Transverse colon (tissue), 4 donors: ENCODE measurements at regions of chr18 and their contacts with region 1.

Region 1: GRCh38 chr18:55589625-55590291 is 1.8 kb upstream of the TCF4 start:
- DNase-seq: peak; percentile 92
- H3K4me3 ChIP-seq: peak overlapping the region; percentile 22 to 69 (median 58)
- H3K27ac ChIP-seq: peak overlapping the region; percentile 83 to 92 (median 88)
- H3K4me1 ChIP-seq: peaks cover 0 to 28% (median under 1%) of the 10 kb centered on the region in 4 donors
- H3K27me3 ChIP-seq: peaks cover 31% of the 10 kb centered on the region
- CTCF ChIP-seq: no peak
- EP300 ChIP-seq: no peak
- POLR2A ChIP-seq: peak; percentile 46

Region 2: GRCh38 chr18:55234366-55235093 is 355.2 kb before region 1 on chr18:
- in situ Hi-C with region 1: loop called in 2 of 4 experiments (anchors 25 kb)
- intact Hi-C with region 1: loop called (anchors 10 kb)
- DNase-seq: peak; percentile 78
- H3K4me3 ChIP-seq: no peak overlapping the region
- H3K27ac ChIP-seq: peak overlapping the region; percentile 1 to 15 (median 2)
- H3K4me1 ChIP-seq: peaks cover 0 to 5% (median 0%) of the 10 kb centered on the region in 4 donors
- H3K27me3 ChIP-seq: no peaks in the 10 kb centered on the region
- CTCF ChIP-seq: peak; percentile 66 to 81 (median 70)
- EP300 ChIP-seq: no peak
- POLR2A ChIP-seq: no peak

Region 3: DNA sequence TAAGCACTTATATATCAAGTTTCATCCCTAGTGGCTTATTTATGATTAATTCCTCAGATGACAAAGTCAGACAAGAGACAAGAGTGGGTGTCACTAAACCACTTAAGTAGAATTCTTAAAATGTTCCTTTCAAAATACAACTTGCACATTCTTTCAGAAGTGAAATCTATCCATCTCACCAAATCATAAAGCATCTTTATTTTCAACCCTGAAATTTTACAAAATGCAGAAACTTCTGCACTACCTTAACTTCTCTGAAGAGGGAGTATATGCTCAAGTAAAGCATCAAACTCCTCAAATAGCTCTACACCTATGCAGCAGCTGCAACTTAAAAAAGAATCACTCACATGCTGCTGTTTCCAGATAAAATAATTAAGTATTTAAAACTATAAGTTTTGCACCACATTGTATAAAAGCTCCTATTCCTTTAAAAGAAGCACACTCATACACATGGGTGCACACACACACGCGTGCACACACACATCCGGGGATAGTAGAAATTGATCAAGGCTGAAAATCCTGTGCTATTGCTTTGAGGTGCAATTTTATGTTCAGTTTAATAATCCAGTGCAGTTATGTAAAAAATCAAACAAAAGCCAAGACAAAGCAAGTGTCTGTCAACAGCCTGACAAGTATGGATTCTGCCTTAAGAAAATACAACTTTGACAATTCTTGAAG is 246.2 kb before region 1 on chr18:
- in situ Hi-C with region 1: loop called in 1 of 4 experiments (anchors 25 kb)
- intact Hi-C with region 1: no loop called
- DNase-seq: no peak
- H3K4me3 ChIP-seq: no peak overlapping the region
- H3K27ac ChIP-seq: no peak overlapping the region
- H3K4me1 ChIP-seq: peaks cover 0 to 10% (median 2%) of the 10 kb centered on the region in 4 donors
- H3K27me3 ChIP-seq: no peaks in the 10 kb centered on the region
- CTCF ChIP-seq: peak in 4 of 5 experiments; percentile 23 to 45 (median 36)
- EP300 ChIP-seq: no peak
- POLR2A ChIP-seq: no peak

Region 4: DNA sequence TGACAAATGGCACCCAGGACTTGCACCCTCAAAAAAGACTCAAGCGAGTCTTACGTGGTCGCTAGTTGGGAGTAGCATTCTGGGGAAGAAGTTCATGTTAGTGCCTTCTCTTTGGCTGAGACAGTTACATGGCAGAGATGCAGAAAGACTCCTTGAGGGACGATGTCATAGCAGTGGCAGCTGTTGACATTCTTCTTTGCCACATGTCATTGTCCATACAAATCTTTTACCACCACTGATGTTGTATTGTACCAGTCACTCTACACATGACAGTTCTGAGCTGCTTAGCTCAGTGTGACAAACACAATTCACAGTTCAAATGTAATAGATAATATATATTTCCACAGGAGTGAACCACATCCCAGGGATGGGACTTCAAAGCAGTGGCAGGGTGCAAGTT is 198.9 kb before region 1 on chr18:
- in situ Hi-C with region 1: no loop called
- intact Hi-C with region 1: no loop called
- DNase-seq: no peak
- H3K4me3 ChIP-seq: no peak overlapping the region
- H3K27ac ChIP-seq: no peak overlapping the region
- H3K4me1 ChIP-seq: peaks cover 0 to 6% (median 0%) of the 10 kb centered on the region in 4 donors
- H3K27me3 ChIP-seq: no peaks in the 10 kb centered on the region
- CTCF ChIP-seq: no peak
- EP300 ChIP-seq: no peak
- POLR2A ChIP-seq: no peak

Region 5: GRCh38 chr18:55422456-55423180 is 167.1 kb before region 1 on chr18:
- in situ Hi-C with region 1: loop called in 2 of 4 experiments (anchors 10 to 25 kb)
- intact Hi-C with region 1: loop called (anchors 5 kb)
- DNase-seq: peak; percentile 22
- H3K4me3 ChIP-seq: peak overlapping the region; percentile 0 to 30 (median 11)
- H3K27ac ChIP-seq: peak overlapping the region; percentile 62 to 72 (median 68)
- H3K4me1 ChIP-seq: peaks cover 0 to 20% (median 0%) of the 10 kb centered on the region in 4 donors
- H3K27me3 ChIP-seq: no peaks in the 10 kb centered on the region
- CTCF ChIP-seq: no peak
- EP300 ChIP-seq: no peak
- POLR2A ChIP-seq: no peak

Region 6: DNA sequence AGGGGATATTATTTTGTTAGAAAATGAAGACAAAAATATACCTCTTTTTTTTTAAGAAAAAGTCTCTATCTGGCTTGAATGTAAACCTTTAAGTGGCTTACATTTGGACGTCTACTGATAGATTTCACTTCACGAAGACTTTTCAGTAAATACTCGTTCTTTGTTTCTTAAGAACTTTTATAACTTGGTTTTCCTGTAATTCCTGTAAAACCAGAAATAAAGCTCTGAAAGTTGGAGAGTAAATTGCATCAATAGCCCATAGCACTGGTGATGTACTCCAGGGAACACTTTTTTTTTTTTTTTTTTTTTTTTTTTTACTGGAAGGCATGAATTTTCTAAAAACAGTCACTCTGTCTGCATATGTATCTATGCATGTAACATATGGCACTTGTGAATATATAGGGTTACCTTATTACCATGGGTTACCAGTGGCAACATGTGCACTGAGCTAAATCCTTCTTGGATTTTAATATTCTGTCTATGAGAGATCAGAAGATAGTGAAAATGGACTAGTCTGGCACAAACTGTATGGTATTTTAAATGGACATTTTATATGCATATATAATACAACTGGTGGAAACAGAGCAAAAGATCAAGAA is 307.4 kb after region 1 on chr18:
- in situ Hi-C with region 1: no loop called
- intact Hi-C with region 1: no loop called
- DNase-seq: no peak
- H3K4me3 ChIP-seq: no peak overlapping the region
- H3K27ac ChIP-seq: no peak overlapping the region
- H3K4me1 ChIP-seq: no peaks in the 10 kb centered on the region
- H3K27me3 ChIP-seq: no peaks in the 10 kb centered on the region
- CTCF ChIP-seq: no peak
- EP300 ChIP-seq: no peak
- POLR2A ChIP-seq: no peak